Breast epithelium (tissue), 4 donors: ENCODE measurements at regions of chr4 and their contacts with region 1.

Region 1: DNA sequence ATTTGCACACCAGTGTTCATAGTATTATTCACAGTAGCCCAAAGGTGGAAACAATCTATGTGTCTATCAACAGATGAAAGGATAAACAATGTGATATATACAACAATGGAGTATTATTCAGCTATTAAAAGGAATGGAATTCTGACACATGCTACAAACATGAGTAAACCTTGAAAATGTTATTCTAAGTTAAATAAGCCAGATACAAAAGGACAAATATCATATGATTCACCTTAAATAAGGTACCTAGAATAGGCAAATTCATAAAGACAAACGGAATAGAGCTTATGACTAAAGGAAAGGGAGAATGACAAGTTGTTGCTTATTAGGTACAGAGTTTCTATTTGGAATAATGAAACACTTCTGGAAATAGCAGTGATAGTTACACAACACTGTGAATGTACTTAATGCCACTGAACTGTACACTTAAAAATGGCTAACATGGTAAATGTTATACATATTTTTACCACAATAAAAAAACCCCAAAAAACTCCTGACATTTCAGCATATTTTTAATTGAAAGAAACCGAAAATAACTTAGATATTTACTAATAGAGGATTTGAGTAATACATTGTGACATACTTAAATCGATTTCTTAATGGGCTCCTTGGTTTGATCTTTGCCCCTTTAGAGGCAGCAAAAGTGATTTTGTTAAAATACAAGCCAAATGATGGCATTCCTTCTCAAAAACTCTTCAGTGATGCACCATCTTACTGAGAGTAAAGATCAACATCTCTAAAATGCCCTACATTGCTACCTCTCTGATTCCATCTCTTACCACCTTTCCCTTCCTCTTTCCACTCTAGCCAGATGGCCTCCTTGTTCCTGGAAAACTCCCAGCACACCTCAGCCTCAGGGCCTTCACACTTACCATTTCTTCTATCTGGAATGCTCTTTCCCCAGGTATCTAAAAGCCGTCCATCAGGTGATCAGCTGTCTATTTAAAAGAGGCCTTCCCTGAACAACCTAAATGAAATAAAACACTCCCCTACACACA is 8.6 kb upstream of the CYP2U1 start:
- DNase-seq: no peak
- H3K4me3 ChIP-seq: no peak overlapping the region
- H3K27ac ChIP-seq: no peak overlapping the region
- H3K4me1 ChIP-seq: no peaks in the 10 kb centered on the region
- H3K27me3 ChIP-seq: no peaks in the 10 kb centered on the region
- CTCF ChIP-seq: no peak
- POLR2A ChIP-seq: no peak

Region 2: GRCh38 chr4:107757864-107758476 is 164.8 kb before region 1 on chr4:
- intact Hi-C with region 1: loop called (anchors 5 kb)
- DNase-seq: no peak
- H3K4me3 ChIP-seq: no peak overlapping the region
- H3K27ac ChIP-seq: no peak overlapping the region
- H3K4me1 ChIP-seq: no peaks in the 10 kb centered on the region
- H3K27me3 ChIP-seq: no peaks in the 10 kb centered on the region
- CTCF ChIP-seq: peak in 2 of 3 donors; percentile 59 to 63
- POLR2A ChIP-seq: no peak

Region 3: DNA sequence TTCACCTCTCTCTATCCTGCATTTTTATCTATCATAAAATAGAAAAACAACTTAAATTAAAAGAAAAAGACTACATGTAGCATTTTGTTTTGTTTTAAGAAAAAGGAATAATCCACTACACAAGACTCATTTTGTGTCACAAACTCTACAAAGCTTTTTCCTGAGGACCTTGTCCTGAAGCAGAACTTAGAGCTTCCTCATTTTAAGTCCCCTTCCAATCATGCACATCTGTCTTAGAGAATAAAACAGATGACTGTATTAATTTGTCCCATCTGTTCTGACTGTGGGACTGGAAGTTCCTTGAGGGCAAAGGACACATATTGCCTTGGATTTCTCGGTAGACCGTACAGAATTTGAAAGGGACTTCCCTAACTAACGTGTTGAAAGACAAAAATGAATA is 1161.1 kb after region 1 on chr4:
- intact Hi-C with region 1: no loop called
- DNase-seq: no peak
- H3K4me3 ChIP-seq: no peak overlapping the region
- H3K27ac ChIP-seq: no peak overlapping the region
- H3K4me1 ChIP-seq: no peaks in the 10 kb centered on the region
- H3K27me3 ChIP-seq: no peaks in the 10 kb centered on the region
- CTCF ChIP-seq: no peak
- POLR2A ChIP-seq: no peak